Vagina (tissue), 2 donors: ENCODE measurements at regions of chr5 and their contacts with region 1.

Region 1: GRCh38 chr5:11744128-11744527 is 160.1 kb downstream of the CTNND2 start:
- DNase-seq: no peak
- H3K4me3 ChIP-seq: no peak overlapping the region
- H3K27ac ChIP-seq: no peak overlapping the region
- H3K4me1 ChIP-seq: no peaks in the 10 kb centered on the region
- H3K27me3 ChIP-seq: no peaks in the 10 kb centered on the region
- CTCF ChIP-seq: no peak
- POLR2A ChIP-seq: no peak

Region 2: DNA sequence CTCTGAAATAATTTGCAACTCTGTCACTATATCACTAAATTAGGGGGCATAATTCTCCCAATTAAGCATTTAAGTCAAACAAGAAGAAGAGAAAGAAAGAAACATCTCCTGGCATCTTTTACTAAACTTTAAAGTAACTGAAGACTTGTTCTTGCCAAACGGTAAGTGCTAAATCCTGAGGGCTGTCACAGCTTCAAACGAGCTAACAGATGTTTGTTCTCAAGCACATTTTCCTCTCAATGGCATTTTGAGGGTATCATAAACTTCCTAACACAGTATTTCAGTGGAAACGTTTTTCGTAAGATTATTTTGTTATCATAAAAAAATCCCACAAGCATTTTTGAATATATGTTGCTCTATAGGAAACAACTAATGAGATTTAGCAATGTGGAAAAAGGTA is 1944.5 kb before region 1 on chr5:
- intact Hi-C with region 1: no loop called
- DNase-seq: no peak
- H3K4me3 ChIP-seq: no peak overlapping the region
- H3K27ac ChIP-seq: no peak overlapping the region
- H3K4me1 ChIP-seq: no peaks in the 10 kb centered on the region
- H3K27me3 ChIP-seq: no peaks in the 10 kb centered on the region
- CTCF ChIP-seq: no peak
- POLR2A ChIP-seq: no peak

Region 3: DNA sequence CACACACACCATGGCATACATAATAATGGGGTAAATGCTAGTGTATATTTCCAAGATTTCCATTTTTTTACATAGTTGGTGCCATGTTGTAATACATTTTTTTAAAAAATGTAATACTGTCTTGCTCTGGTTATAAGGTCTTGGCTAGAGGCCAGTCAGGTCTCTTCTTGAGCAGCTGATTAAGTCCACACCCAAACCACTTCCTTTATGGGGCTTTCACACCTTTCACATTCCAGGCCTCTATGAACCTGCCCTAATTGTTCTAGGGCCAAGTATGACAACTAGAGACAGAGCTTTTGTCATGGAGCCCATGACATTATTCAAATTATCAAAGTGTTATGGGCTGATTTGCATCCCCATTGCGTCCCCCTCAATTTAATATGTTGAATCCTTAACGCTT is 655.7 kb after region 1 on chr5:
- intact Hi-C with region 1: loop called (anchors 10 kb)
- DNase-seq: no peak
- H3K4me3 ChIP-seq: no peak overlapping the region
- H3K27ac ChIP-seq: no peak overlapping the region
- H3K4me1 ChIP-seq: no peaks in the 10 kb centered on the region
- H3K27me3 ChIP-seq: no peaks in the 10 kb centered on the region
- CTCF ChIP-seq: no peak
- POLR2A ChIP-seq: no peak